HEK293 (cell line): ENCODE measurements at regions of chr17 and their contacts with region 1.

Region 1: GRCh38 chr17:29252101-29252866 is 5.6 kb downstream of the CRYBA1 start:
- H3K4me3 ChIP-seq: no peak overlapping the region
- H3K27ac ChIP-seq: no peak overlapping the region
- H3K4me1 ChIP-seq: peaks cover 3% of the 10 kb centered on the region; the same call in 1 of the 2 replicates
- CTCF ChIP-seq: no peak

Region 2: GRCh38 chr17:29241015-29241963 is 11.0 kb before region 1 on chr17:
- CTCF ChIA-PET with region 1: interaction called, 11 read pairs
- POLR2A ChIA-PET with region 1: interaction called, 3 read pairs
- H3K4me3 ChIP-seq: no peak overlapping the region
- H3K27ac ChIP-seq: peak overlapping the region; percentile 22; the same call in 1 of the 2 replicates
- H3K4me1 ChIP-seq: no peaks in the 10 kb centered on the region
- CTCF ChIP-seq: no peak